CD4-positive, alpha-beta memory T cell (primary cell): ENCODE measurements at regions of chr1 and their contacts with region 1.

Region 1: GRCh38 chr1:223726380-223727001 is 14.2 kb downstream of the CAPN2 start:
- DNase-seq: peak; percentile 68 to 98 (median 78)
- H3K4me3 ChIP-seq: peak overlapping the region in 1 of 2 donors; percentile 20
- H3K4me3 Mint-ChIP-seq: peak overlapping the region; percentile 70 to 92 (median 82)
- H3K27ac ChIP-seq: peak overlapping the region; percentile 85
- H3K27ac Mint-ChIP-seq: peak overlapping the region; percentile 85 to 99 (median 95)
- H3K4me1 ChIP-seq: peaks cover 80% of the 10 kb centered on the region
- H3K4me1 Mint-ChIP-seq: peaks cover 55 to 94% (median 74%) of the 10 kb centered on the region in 4 donors
- H3K27me3 ChIP-seq: no peaks in the 10 kb centered on the region
- H3K27me3 Mint-ChIP-seq: no peaks in the 10 kb centered on the region

Region 2: GRCh38 chr1:223312705-223313414 is 413.6 kb before region 1 on chr1:
- CTCF ChIA-PET with region 1: no interaction called
- POLR2A ChIA-PET with region 1: no interaction called
- intact Hi-C with region 1: no loop called
- DNase-seq: no peak
- H3K4me3 ChIP-seq: no peak overlapping the region
- H3K4me3 Mint-ChIP-seq: no peak overlapping the region
- H3K27ac ChIP-seq: no peak overlapping the region
- H3K27ac Mint-ChIP-seq: no peak overlapping the region
- H3K4me1 ChIP-seq: no peaks in the 10 kb centered on the region
- H3K4me1 Mint-ChIP-seq: peaks cover 6 to 12% (median 7%) of the 10 kb centered on the region in 4 donors
- H3K27me3 ChIP-seq: no peaks in the 10 kb centered on the region
- H3K27me3 Mint-ChIP-seq: no peaks in the 10 kb centered on the region

Region 3: DNA sequence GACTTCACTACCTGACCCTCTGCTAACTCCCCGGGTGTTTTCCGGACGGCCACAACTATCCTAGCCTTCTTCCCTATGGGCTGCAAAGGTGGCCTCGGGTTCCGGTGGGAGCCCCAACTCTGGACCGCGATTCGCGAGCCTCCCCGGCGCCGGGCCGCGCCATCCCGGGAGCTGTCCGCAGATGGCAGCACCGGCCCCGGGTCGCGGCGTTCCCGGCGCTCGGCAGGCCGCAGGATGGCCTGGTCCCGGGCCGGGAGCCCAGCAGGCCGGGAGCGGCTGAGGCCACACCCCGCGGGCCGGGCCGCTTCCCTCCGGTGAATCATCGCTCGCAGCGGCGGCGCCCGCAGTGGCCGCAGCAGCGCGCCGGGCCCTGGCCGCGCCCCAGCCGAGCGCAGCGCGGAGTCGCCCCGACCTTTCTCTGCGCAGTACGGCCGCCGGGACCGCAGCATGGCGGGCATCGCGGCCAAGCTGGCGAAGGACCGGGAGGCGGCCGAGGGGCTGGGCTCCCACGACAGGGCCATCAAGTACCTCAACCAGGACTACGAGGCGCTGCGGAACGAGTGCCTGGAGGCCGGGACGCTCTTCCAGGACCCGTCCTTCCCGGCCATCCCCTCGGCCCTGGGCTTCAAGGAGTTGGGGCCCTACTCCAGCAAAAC is 14.2 kb before region 1 on chr1 and contains the start of gene CAPN2:
- CTCF ChIA-PET with region 1: interaction called, 22 read pairs
- POLR2A ChIA-PET with region 1: interaction called, 62 read pairs
- intact Hi-C with region 1: loop called (anchors 1 kb)
- DNase-seq: peak; percentile 54 to 67 (median 62)
- H3K4me3 ChIP-seq: peak within 1 kb of the TSS; percentile 53 to 74
- H3K4me3 Mint-ChIP-seq: peak within 1 kb of the TSS; percentile 86 to 95 (median 88)
- H3K27ac ChIP-seq: peak within 1 kb of the TSS; percentile 79
- H3K27ac Mint-ChIP-seq: peak within 1 kb of the TSS; percentile 91 to 98 (median 94)
- H3K4me1 ChIP-seq: peaks cover 61% of the 10 kb centered on the region
- H3K4me1 Mint-ChIP-seq: peaks cover 50 to 75% (median 58%) of the 10 kb centered on the region in 4 donors
- H3K27me3 ChIP-seq: no peaks in the 10 kb centered on the region
- H3K27me3 Mint-ChIP-seq: no peaks in the 10 kb centered on the region
- total RNA-seq, gene CAPN2: 178 to 180 TPM